SK-N-SH (cell line): ENCODE measurements at regions of chr2 and their contacts with region 1.

Region 1: DNA sequence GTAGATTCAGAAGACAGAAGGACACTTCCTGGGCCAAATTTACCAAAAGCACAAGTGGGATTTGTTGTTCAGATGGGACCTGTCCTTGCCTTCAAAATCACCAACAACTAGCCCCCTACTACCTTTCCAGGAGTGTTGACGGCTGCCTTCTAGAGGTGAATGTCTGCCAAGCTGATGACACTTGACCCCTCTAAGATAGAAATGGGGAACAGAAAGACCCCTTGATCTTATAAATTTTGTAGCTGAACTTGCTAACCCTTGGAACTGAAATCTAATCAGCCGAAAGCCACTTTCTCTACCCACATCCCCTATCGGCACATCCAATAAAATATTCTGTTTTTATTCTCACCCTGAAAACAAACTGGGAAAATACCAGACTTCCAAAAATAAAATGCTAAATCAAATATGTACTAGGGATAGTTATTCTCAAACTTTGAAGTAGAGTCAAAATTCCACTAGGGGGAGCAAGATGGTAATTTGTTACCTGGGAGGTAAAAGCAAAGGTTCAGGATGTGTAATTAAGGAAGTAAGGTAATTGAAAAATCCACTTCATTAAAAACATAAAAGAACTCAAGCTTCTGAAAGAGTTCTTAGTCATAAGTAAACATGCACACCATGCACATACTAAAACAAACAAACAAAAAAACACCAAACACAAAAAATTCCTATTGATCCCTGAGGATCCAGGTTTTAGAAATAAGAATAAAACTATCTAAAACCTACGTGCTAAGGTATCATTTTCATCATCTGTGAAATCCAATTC is 119.2 kb downstream of the ANKRD44 start:
- DNase-seq: peak; percentile 48
- H3K4me3 ChIP-seq: no peak overlapping the region; a peak in 1 of 4 replicates
- H3K27ac ChIP-seq: peak overlapping the region in 1 of 2 experiments; percentile 69; a peak in 2 of 4 replicates
- H3K4me1 ChIP-seq: peaks cover 0 to 27% of the 10 kb centered on the region in 2 experiments; a peak in 2 of 4 replicates
- H3K27me3 ChIP-seq: no peaks in the 10 kb centered on the region
- CTCF ChIP-seq: peak; percentile 83
- EP300 ChIP-seq: no peak
- RAD21 ChIP-seq: peak; percentile 89

Region 2: GRCh38 chr2:196361606-196362326 is 829.6 kb before region 1 on chr2:
- CTCF ChIA-PET with region 1: no interaction called
- POLR2A ChIA-PET with region 1: no interaction called
- DNase-seq: no peak
- H3K4me3 ChIP-seq: no peak overlapping the region
- H3K27ac ChIP-seq: no peak overlapping the region
- H3K4me1 ChIP-seq: no peaks in the 10 kb centered on the region
- H3K27me3 ChIP-seq: no peaks in the 10 kb centered on the region
- CTCF ChIP-seq: no peak
- EP300 ChIP-seq: no peak
- RAD21 ChIP-seq: no peak

Region 3: DNA sequence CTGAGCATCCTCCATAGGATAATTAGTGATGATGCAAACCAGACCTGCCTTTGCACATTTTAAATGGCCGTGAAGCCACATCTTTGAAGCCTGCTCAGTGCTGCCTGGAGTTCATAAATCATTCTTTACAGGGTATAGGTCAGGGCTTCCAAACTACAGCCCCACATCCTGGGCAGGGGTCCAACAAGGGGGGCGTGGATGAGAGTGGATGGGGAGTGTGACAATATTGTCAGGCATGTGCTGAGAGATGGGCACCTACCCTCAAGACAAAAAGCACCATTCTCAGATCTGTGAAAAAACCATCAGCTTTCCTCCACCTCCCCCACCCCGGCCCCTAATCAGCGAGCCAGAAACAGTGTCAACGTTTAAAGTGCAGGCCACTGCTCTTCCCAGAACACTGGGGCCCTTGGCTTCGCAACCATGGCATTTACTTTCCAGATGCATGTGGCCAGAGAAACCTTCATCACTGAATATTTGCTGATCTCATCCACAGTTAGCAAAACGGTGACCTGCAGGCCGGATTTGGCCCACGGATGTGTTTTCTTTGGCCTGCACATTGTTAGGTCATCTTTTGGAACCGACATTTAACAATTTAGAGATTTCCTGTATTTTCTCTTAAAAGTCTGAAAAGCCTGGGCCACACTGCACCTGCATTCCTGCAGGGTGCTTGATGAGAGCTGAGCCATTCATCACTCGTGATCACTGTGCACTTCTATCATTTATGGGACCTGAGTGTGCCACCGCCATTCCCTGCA is 11.4 kb before region 1 on chr2:
- CTCF ChIA-PET with region 1: interaction called, 35 read pairs
- POLR2A ChIA-PET with region 1: no interaction called
- DNase-seq: peak; percentile 70
- H3K4me3 ChIP-seq: no peak overlapping the region; a peak in 1 of 4 replicates
- H3K27ac ChIP-seq: peak overlapping the region; percentile 49 to 99
- H3K4me1 ChIP-seq: peaks cover 6 to 41% of the 10 kb centered on the region in 2 experiments; a peak in 3 of 4 replicates
- H3K27me3 ChIP-seq: no peaks in the 10 kb centered on the region
- CTCF ChIP-seq: no peak
- EP300 ChIP-seq: peak; percentile 76 to 91
- RAD21 ChIP-seq: no peak; the same call in 1 of the 2 replicates

Region 4: DNA sequence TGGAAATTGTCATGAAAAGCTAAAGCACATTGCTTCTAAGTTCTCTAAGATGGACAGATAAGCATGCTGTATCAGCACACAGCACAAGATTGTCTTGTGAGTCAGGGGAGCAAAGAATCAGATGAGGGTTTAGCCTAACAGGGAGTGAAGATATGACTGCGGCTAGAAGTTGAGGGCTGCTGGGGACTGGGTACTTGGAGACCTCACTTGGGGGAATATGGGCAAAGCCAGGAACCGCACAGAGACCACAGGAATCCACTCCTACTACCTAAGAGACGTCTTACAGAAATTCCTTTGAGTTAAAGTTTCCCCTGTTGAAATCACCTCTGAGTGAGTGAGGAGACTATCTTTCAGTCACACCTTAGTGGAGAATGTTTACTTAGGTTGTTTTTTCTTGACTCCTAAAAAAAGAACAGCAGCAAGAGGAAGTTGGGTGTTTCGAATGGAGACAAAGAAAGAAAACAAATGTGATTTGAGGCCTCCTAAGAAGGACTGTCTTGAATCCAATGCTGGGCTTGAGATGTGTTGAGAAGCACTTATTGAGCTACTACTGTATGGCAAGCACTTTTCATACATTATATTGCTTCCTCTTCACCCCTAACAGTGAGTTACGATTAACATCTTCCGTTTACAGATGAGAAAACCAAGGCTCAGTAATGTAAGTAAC is 18.5 kb after region 1 on chr2:
- CTCF ChIA-PET with region 1: interaction called, 14 read pairs
- POLR2A ChIA-PET with region 1: no interaction called
- DNase-seq: no peak
- H3K4me3 ChIP-seq: no peak overlapping the region
- H3K27ac ChIP-seq: peak overlapping the region; percentile 11 to 58; a peak in 3 of 4 replicates
- H3K4me1 ChIP-seq: peaks cover 7 to 25% of the 10 kb centered on the region in 2 experiments; a peak in 3 of 4 replicates
- H3K27me3 ChIP-seq: no peaks in the 10 kb centered on the region
- CTCF ChIP-seq: no peak
- EP300 ChIP-seq: no peak
- RAD21 ChIP-seq: no peak

Region 5: GRCh38 chr2:197255543-197255942 is 64.2 kb after region 1 on chr2:
- CTCF ChIA-PET with region 1: interaction called, 19 read pairs
- POLR2A ChIA-PET with region 1: no interaction called
- DNase-seq: peak; percentile 87
- H3K4me3 ChIP-seq: peak overlapping the region in 1 of 2 experiments; percentile 9; a peak in 1 of 4 replicates
- H3K27ac ChIP-seq: peak overlapping the region; percentile 43 to 98
- H3K4me1 ChIP-seq: peaks cover 20 to 22% of the 10 kb centered on the region in 2 experiments; a peak in 2 of 4 replicates
- H3K27me3 ChIP-seq: no peaks in the 10 kb centered on the region
- CTCF ChIP-seq: no peak
- EP300 ChIP-seq: peak in 1 of 2 experiments; percentile 73; a peak in 2 of 4 replicates
- RAD21 ChIP-seq: peak; percentile 15

Region 6: GRCh38 chr2:197378494-197379307 is 187.3 kb after region 1 on chr2:
- CTCF ChIA-PET with region 1: interaction called, 12 read pairs
- POLR2A ChIA-PET with region 1: no interaction called
- DNase-seq: peak; percentile 81
- H3K4me3 ChIP-seq: no peak overlapping the region; a peak in 1 of 4 replicates
- H3K27ac ChIP-seq: peak overlapping the region; percentile 11 to 63; a peak in 2 of 4 replicates
- H3K4me1 ChIP-seq: peaks cover 6 to 8% of the 10 kb centered on the region in 2 experiments; a peak in 2 of 4 replicates
- H3K27me3 ChIP-seq: no peaks in the 10 kb centered on the region
- CTCF ChIP-seq: peak; percentile 91
- EP300 ChIP-seq: no peak
- RAD21 ChIP-seq: peak; percentile 99